ENCODE measurements at regions of chr1 and their contacts with region 1.

Region 1: GRCh38 chr1:169509351-169509750 is 23.6 kb upstream of the SLC19A2 start:
- DNase-seq: peak in 1 of 2 experiments; percentile 30
- H3K4me3 ChIP-seq: no peak overlapping the region
- H3K4me3 Mint-ChIP-seq: no peak overlapping the region
- H3K27ac Mint-ChIP-seq: peak overlapping the region; percentile 46
- H3K4me1 ChIP-seq: peaks cover 50% of the 10 kb centered on the region
- H3K4me1 Mint-ChIP-seq: peaks cover 39% of the 10 kb centered on the region
- H3K27me3 ChIP-seq: no peaks in the 10 kb centered on the region
- H3K27me3 Mint-ChIP-seq: no peaks in the 10 kb centered on the region
- CTCF ChIP-seq: peak in 1 of 2 experiments; percentile 22

Region 2: GRCh38 chr1:169466259-169467230 is 42.8 kb before region 1 on chr1:
- CTCF ChIA-PET with region 1: interaction called, 4 read pairs
- POLR2A ChIA-PET with region 1: no interaction called
- intact Hi-C with region 1: loop called (anchors 1 kb)
- DNase-seq: peak in 1 of 2 experiments; percentile 56
- H3K4me3 ChIP-seq: no peak overlapping the region
- H3K4me3 Mint-ChIP-seq: no peak overlapping the region
- H3K27ac Mint-ChIP-seq: no peak overlapping the region
- H3K4me1 ChIP-seq: no peaks in the 10 kb centered on the region
- H3K4me1 Mint-ChIP-seq: no peaks in the 10 kb centered on the region
- H3K27me3 ChIP-seq: no peaks in the 10 kb centered on the region
- H3K27me3 Mint-ChIP-seq: no peaks in the 10 kb centered on the region
- CTCF ChIP-seq: peak; percentile 24 to 60

Region 3: DNA sequence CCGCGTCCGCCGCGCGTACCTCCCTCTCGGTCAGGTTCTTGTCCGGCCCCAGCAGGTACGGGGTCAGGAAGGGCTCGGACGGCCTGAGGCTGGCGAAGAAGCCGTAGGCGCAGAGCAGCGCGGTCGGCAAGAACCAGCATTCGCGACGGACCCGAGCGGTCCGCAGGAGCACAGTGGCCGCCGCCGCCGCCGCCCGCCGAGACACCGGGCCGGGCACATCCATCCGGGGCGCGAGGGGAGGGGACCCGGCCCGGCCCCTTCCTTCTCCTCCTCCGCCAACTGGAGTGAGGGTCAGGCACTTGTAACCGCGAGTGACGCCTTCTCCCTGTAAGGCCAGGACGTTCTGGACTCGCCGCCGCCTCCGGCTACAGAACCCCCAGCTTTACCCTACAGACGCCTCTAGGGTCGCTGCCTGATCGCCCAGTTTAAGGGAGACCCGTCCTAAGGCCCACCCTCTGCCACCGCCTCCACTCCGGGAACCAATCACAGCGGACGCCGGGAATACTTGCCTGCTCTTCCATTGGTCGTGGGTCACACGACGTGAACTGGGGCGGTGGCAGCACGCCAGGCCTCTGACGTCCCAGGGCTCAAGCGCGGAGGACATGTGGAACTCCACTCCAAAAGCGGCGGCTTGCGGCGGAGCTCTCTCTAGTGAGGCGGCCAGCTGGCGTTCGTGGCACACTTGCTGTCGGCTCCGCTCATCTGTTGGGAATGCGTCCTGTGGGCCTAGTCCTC is 23.6 kb before region 1 on chr1 and contains the start of gene SLC19A2:
- CTCF ChIA-PET with region 1: interaction called, 13 read pairs
- POLR2A ChIA-PET with region 1: interaction called, 13 read pairs
- intact Hi-C with region 1: loop called (anchors 1 kb)
- DNase-seq: peak; percentile 98 to 99
- H3K4me3 ChIP-seq: peak within 1 kb of the TSS; percentile 85
- H3K4me3 Mint-ChIP-seq: peak within 1 kb of the TSS; percentile 89
- H3K27ac Mint-ChIP-seq: peak within 1 kb of the TSS; percentile 94
- H3K4me1 ChIP-seq: peaks cover 39% of the 10 kb centered on the region
- H3K4me1 Mint-ChIP-seq: peaks cover 33% of the 10 kb centered on the region
- H3K27me3 ChIP-seq: no peaks in the 10 kb centered on the region
- H3K27me3 Mint-ChIP-seq: no peaks in the 10 kb centered on the region
- CTCF ChIP-seq: peak in 1 of 2 experiments; percentile 64
- total RNA-seq, gene SLC19A2: 28.7 and 31.5 TPM in 2 replicates

Region 4: DNA sequence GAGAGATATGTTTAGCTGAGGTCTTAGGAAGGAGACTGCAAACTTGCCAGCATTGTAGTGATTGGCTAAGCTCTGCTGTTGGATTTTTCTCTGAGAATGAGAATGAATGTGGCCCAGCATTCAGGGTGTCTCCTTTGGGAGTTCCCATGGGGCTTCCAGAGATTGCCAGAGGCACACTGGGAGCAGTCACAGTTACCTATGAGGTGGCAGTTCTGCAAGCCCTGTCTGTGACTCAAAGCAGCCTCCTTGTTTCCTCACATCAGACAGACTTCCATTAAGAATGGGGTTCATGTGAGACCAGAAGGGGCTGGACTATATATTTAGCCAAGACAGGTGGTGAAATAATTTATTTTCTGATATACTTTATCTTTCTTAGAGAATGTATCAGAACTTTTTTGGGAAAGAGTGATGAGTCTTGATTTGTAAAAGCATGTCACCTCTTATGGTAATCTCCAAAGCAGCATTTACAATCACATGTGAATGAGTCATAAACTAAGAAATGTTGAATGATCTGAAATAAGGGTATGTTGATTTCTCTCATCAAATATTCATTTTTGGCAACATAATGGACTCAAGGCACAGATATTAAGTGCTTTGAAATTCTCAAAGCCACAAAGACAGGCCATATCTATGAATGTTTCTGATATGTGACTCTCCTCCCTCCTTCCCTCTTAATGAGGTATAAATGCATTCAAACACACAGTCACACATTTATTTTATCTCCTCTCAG is 14.1 kb before region 1 on chr1:
- CTCF ChIA-PET with region 1: no interaction called
- POLR2A ChIA-PET with region 1: no interaction called
- intact Hi-C with region 1: loop called (anchors 1 kb)
- DNase-seq: no peak
- H3K4me3 ChIP-seq: no peak overlapping the region
- H3K4me3 Mint-ChIP-seq: no peak overlapping the region
- H3K27ac Mint-ChIP-seq: no peak overlapping the region
- H3K4me1 ChIP-seq: peaks cover 23% of the 10 kb centered on the region
- H3K4me1 Mint-ChIP-seq: peaks cover 22% of the 10 kb centered on the region
- H3K27me3 ChIP-seq: no peaks in the 10 kb centered on the region
- H3K27me3 Mint-ChIP-seq: no peaks in the 10 kb centered on the region
- CTCF ChIP-seq: no peak

Region 5: GRCh38 chr1:169529068-169529696 is 19.8 kb after region 1 on chr1:
- CTCF ChIA-PET with region 1: interaction called, 5 read pairs
- POLR2A ChIA-PET with region 1: no interaction called
- intact Hi-C with region 1: loop called (anchors 1 kb)
- DNase-seq: peak; percentile 88 to 91
- H3K4me3 ChIP-seq: no peak overlapping the region
- H3K4me3 Mint-ChIP-seq: peak overlapping the region; percentile 57
- H3K27ac Mint-ChIP-seq: peak overlapping the region; percentile 98
- H3K4me1 ChIP-seq: peaks cover 65% of the 10 kb centered on the region
- H3K4me1 Mint-ChIP-seq: peaks cover 56% of the 10 kb centered on the region
- H3K27me3 ChIP-seq: no peaks in the 10 kb centered on the region
- H3K27me3 Mint-ChIP-seq: no peaks in the 10 kb centered on the region
- CTCF ChIP-seq: no peak

Region 6: DNA sequence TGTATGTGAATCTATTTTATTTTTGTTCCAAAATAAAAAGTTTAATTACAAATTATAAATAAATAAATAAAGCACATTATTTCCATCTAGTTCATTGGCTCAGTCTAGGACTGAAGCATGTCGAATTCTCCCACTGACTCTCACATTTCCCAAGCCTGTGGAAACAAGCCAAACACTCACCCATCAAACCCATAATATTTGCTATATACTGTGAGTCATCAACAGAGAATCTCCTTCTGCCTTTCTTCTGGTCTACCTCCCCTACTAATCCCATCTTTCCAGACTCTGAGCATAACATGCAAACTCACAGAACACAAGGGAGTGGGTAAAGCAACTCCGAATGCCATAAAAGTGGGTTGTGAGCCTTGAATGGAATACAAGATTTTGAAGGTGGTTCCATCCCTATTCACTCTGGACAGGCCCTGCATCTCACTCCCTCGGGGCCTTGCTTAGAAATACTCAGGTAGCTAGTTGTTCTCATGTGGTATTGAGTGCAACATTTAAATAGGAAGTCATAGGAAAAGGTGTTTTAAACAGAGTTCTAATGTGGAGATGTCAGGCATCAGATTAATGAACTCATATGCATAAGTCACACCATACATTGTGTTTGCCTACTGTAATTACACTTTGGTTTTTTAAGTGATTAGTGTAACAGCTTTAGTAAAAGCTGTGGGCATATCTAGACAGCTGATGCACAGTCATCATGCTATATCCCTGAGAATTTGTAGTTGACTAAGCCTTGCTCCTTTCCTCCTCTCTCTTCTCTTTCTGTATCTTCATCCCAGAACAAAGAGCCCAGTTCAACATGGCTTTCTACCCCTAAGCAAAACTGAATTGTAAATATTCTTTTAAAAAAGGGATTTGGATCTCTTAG is 29.9 kb after region 1 on chr1:
- CTCF ChIA-PET with region 1: no interaction called
- POLR2A ChIA-PET with region 1: no interaction called
- intact Hi-C with region 1: no loop called
- DNase-seq: no peak
- H3K4me3 ChIP-seq: no peak overlapping the region
- H3K4me3 Mint-ChIP-seq: no peak overlapping the region
- H3K27ac Mint-ChIP-seq: peak overlapping the region; percentile 4
- H3K4me1 ChIP-seq: peaks cover 11% of the 10 kb centered on the region
- H3K4me1 Mint-ChIP-seq: peaks cover 14% of the 10 kb centered on the region
- H3K27me3 ChIP-seq: no peaks in the 10 kb centered on the region
- H3K27me3 Mint-ChIP-seq: no peaks in the 10 kb centered on the region
- CTCF ChIP-seq: no peak